Endothelial cell of umbilical vein (primary cell): ENCODE measurements at regions of chr1 and their contacts with region 1.

Region 1: DNA sequence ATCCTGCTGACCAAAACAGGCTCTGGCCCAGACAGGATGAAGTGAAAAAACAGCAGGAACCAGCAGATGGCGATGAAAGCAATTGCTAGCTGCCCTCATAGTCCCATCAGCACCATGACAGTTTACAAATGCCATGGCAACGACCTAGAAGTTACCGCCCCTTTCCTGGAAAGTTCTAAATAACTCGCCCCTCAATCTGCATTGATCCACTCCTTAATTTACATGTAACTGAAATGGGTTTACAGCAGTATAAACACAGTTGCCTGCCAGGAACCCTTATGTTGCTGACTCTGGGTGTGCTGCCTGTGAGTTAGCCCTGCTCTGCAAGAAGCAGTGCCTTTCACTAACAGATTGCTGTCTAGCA is 65.5 kb upstream of the CR1L start:
- DNase-seq: peak; percentile 70
- H3K4me3 ChIP-seq: no peak overlapping the region
- H3K27ac ChIP-seq: no peak overlapping the region
- H3K4me1 ChIP-seq: no peaks in the 10 kb centered on the region
- H3K27me3 ChIP-seq: peaks cover 4 to 12% of the 10 kb centered on the region in 2 experiments
- CTCF ChIP-seq: peak; percentile 52 to 70
- POLR2A ChIP-seq: no peak

Region 2: GRCh38 chr1:207619871-207620542 is 40.6 kb after region 1 on chr1:
- CTCF ChIA-PET with region 1: interaction called, 20 read pairs
- POLR2A ChIA-PET with region 1: no interaction called
- dilution Hi-C with region 1: no loop called
- intact Hi-C with region 1: no loop called
- DNase-seq: peak; percentile 50
- H3K4me3 ChIP-seq: no peak overlapping the region
- H3K27ac ChIP-seq: no peak overlapping the region
- H3K4me1 ChIP-seq: no peaks in the 10 kb centered on the region
- H3K27me3 ChIP-seq: peaks cover 2 to 6% of the 10 kb centered on the region in 2 experiments
- CTCF ChIP-seq: peak; percentile 49 to 77
- POLR2A ChIP-seq: no peak

Region 3: GRCh38 chr1:207672522-207673130 is 93.2 kb after region 1 on chr1:
- CTCF ChIA-PET with region 1: interaction called, 39 read pairs
- POLR2A ChIA-PET with region 1: no interaction called
- dilution Hi-C with region 1: no loop called
- intact Hi-C with region 1: loop called (anchors 1 kb)
- DNase-seq: peak; percentile 51
- H3K4me3 ChIP-seq: no peak overlapping the region
- H3K27ac ChIP-seq: no peak overlapping the region
- H3K4me1 ChIP-seq: no peaks in the 10 kb centered on the region
- H3K27me3 ChIP-seq: peaks cover 30 to 38% of the 10 kb centered on the region in 2 experiments
- CTCF ChIP-seq: peak; percentile 20 to 41
- POLR2A ChIP-seq: no peak